Transverse colon (tissue), 4 donors: ENCODE measurements at regions of chr12 and their contacts with region 1.

Region 1: GRCh38 chr12:72089678-72090077 is 151.0 kb downstream of the TPH2 start:
- DNase-seq: no peak
- H3K4me3 ChIP-seq: no peak overlapping the region
- H3K27ac ChIP-seq: no peak overlapping the region
- H3K4me1 ChIP-seq: no peaks in the 10 kb centered on the region
- H3K27me3 ChIP-seq: no peaks in the 10 kb centered on the region
- CTCF ChIP-seq: no peak
- EP300 ChIP-seq: no peak
- POLR2A ChIP-seq: no peak

Region 2: GRCh38 chr12:71321531-71321930 is 768.1 kb before region 1 on chr12:
- in situ Hi-C with region 1: no loop called
- intact Hi-C with region 1: loop called (anchors 5 kb)
- DNase-seq: no peak
- H3K4me3 ChIP-seq: no peak overlapping the region
- H3K27ac ChIP-seq: no peak overlapping the region
- H3K4me1 ChIP-seq: no peaks in the 10 kb centered on the region
- H3K27me3 ChIP-seq: no peaks in the 10 kb centered on the region
- CTCF ChIP-seq: no peak
- EP300 ChIP-seq: no peak
- POLR2A ChIP-seq: no peak

Region 3: DNA sequence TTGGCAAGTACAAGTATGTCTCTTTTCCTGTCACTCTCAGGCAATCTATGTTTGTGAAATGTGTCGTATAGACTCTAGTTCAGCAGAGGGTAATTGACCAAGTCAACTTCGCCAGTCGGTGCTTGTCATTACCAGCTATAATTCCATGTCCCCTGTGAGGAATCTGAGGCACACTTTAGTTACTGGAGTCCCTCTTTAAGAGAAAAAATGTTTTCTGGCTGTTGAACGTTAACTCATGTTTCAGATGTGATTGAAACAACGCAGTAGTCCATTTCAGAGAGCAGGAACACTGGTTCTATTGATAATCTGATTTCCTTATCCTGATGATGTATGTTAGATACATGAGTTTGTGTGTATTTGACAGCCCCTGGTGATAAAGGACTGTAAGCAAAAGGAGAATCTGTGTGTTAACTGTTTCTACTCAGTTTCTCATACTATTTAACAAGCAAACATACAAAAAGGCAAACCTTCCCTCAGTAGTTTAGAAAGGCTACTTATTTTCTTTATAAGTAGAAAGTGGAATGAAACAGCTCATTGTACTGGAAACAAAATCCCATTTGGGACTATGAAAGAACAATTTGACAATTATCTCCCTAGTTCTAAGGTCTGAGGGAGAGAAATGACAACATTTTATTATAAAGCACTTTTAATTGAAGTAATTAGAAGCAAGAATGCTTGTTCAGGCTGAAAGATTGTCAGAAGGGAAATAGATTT is 21.4 kb after region 1 on chr12:
- in situ Hi-C with region 1: no loop called
- intact Hi-C with region 1: no loop called
- DNase-seq: no peak
- H3K4me3 ChIP-seq: no peak overlapping the region
- H3K27ac ChIP-seq: no peak overlapping the region
- H3K4me1 ChIP-seq: no peaks in the 10 kb centered on the region
- H3K27me3 ChIP-seq: no peaks in the 10 kb centered on the region
- CTCF ChIP-seq: no peak
- EP300 ChIP-seq: no peak
- POLR2A ChIP-seq: no peak